CD4-positive, alpha-beta memory T cell (primary cell): ENCODE measurements at regions of chr4 and their contacts with region 1.

Region 1: GRCh38 chr4:26197018-26197779 is 123.6 kb upstream of the RBPJ start:
- DNase-seq: peak; percentile 55 to 88 (median 68)
- H3K4me3 ChIP-seq: peak overlapping the region; percentile 43
- H3K4me3 Mint-ChIP-seq: peak overlapping the region; percentile 72 to 88 (median 81)
- H3K27ac ChIP-seq: peak overlapping the region; percentile 27
- H3K27ac Mint-ChIP-seq: peak overlapping the region; percentile 88 to 96 (median 94)
- H3K4me1 ChIP-seq: peaks cover 52% of the 10 kb centered on the region
- H3K4me1 Mint-ChIP-seq: peaks cover 45 to 80% (median 70%) of the 10 kb centered on the region in 4 donors
- H3K27me3 ChIP-seq: no peaks in the 10 kb centered on the region
- H3K27me3 Mint-ChIP-seq: no peaks in the 10 kb centered on the region

Region 2: GRCh38 chr4:25862411-25863346 is 334.5 kb before region 1 on chr4 and contains the start of gene SEL1L3:
- CTCF ChIA-PET with region 1: no interaction called
- POLR2A ChIA-PET with region 1: no interaction called
- intact Hi-C with region 1: loop called (anchors 10 kb)
- DNase-seq: peak; percentile 31 to 54 (median 43)
- H3K4me3 ChIP-seq: peak within 1 kb of the TSS; percentile 71 to 74
- H3K4me3 Mint-ChIP-seq: peak within 1 kb of the TSS; percentile 95 to 100 (median 98)
- H3K27ac ChIP-seq: peak within 1 kb of the TSS; percentile 87
- H3K27ac Mint-ChIP-seq: peak within 1 kb of the TSS; percentile 92 to 99 (median 94)
- H3K4me1 ChIP-seq: peaks cover 48% of the 10 kb centered on the region
- H3K4me1 Mint-ChIP-seq: peaks cover 33 to 50% (median 41%) of the 10 kb centered on the region in 4 donors
- H3K27me3 ChIP-seq: no peaks in the 10 kb centered on the region
- H3K27me3 Mint-ChIP-seq: no peaks in the 10 kb centered on the region
- total RNA-seq, gene SEL1L3: 61.4 to 64.3 TPM

Region 3: GRCh38 chr4:26319467-26319948 is 122.3 kb after region 1 on chr4:
- CTCF ChIA-PET with region 1: interaction called, 10 read pairs
- POLR2A ChIA-PET with region 1: interaction called, 26 read pairs
- intact Hi-C with region 1: loop called (anchors 1 kb)
- DNase-seq: peak; percentile 96 to 98 (median 96)
- H3K4me3 ChIP-seq: peak overlapping the region; percentile 86
- H3K4me3 Mint-ChIP-seq: peak overlapping the region; percentile 96 to 100 (median 97)
- H3K27ac ChIP-seq: peak overlapping the region; percentile 97
- H3K27ac Mint-ChIP-seq: peak overlapping the region; percentile 98 to 99 (median 99)
- H3K4me1 ChIP-seq: peaks cover 32% of the 10 kb centered on the region
- H3K4me1 Mint-ChIP-seq: peaks cover 21 to 55% (median 32%) of the 10 kb centered on the region in 4 donors
- H3K27me3 ChIP-seq: no peaks in the 10 kb centered on the region
- H3K27me3 Mint-ChIP-seq: peaks cover 0 to 2% of the 10 kb centered on the region in 2 donors